PC-3 (cell line): ENCODE measurements at regions of chr7 and their contacts with region 1.

Region 1: DNA sequence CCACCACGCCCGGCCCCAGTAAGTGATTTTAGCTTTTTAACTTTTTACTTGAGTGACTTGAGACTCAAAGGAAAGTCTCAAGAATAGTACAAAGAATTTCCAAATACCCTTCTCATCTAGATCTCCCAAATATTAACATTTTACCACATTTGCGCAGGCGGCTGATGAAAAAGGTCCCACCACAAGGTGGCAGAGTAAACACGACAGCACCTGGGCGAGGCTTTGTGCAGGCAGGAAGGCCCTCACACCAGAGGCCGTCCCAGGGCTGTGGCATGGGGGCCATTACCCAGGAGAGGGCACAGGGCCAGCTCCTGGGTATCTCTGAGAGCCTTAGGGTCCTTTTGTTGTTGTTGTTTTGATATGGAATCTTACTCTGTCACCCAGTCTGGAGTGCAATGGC is 50.0 kb upstream of the WIPI2 start:
- DNase-seq: peak; percentile 22
- ATAC-seq: peak; percentile 37; the same call in 1 of the 2 replicates
- H3K4me3 ChIP-seq: no peak overlapping the region
- H3K27ac ChIP-seq: no peak overlapping the region
- H3K4me1 ChIP-seq: no peaks in the 10 kb centered on the region
- H3K27me3 ChIP-seq: no peaks in the 10 kb centered on the region
- CTCF ChIP-seq: peak; percentile 49

Region 2: GRCh38 chr7:4700577-4701235 is 439.3 kb before region 1 on chr7:
- CTCF ChIA-PET with region 1: no interaction called
- POLR2A ChIA-PET with region 1: no interaction called
- intact Hi-C with region 1: no loop called
- DNase-seq: no peak
- ATAC-seq: no peak
- H3K4me3 ChIP-seq: no peak overlapping the region
- H3K27ac ChIP-seq: no peak overlapping the region
- H3K4me1 ChIP-seq: no peaks in the 10 kb centered on the region
- H3K27me3 ChIP-seq: no peaks in the 10 kb centered on the region
- CTCF ChIP-seq: no peak

Region 3: GRCh38 chr7:4973728-4974198 is 166.2 kb before region 1 on chr7:
- CTCF ChIA-PET with region 1: no interaction called
- POLR2A ChIA-PET with region 1: no interaction called
- intact Hi-C with region 1: no loop called
- DNase-seq: peak; percentile 92
- ATAC-seq: peak; percentile 92
- H3K4me3 ChIP-seq: peak overlapping the region; percentile 77
- H3K27ac ChIP-seq: peak overlapping the region; percentile 66
- H3K4me1 ChIP-seq: no peaks in the 10 kb centered on the region; the same call in 1 of the 2 replicates
- H3K27me3 ChIP-seq: no peaks in the 10 kb centered on the region
- CTCF ChIP-seq: peak; percentile 80

Region 4: DNA sequence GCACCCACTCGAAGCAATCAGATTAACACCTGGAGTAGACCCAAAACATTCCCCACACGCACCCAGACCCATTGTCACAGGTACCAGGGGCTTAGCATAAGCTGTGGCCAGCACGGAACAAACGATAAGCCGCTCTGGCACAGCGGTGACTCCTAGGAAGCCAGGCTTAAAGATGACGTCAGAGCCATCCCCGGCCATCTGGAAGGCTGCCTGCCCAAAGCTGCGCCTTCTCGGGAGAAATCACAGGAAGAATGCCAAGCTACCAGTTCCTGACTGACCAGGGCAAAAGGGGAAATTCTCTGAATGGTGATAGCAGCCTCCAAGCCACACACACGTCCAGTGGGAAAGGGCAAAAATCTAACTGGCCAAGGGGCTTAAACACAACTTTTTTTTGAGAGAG is 37.1 kb after region 1 on chr7:
- CTCF ChIA-PET with region 1: no interaction called
- POLR2A ChIA-PET with region 1: no interaction called
- intact Hi-C with region 1: loop called (anchors 1 kb)
- DNase-seq: peak; percentile 60
- ATAC-seq: peak; percentile 89
- H3K4me3 ChIP-seq: no peak overlapping the region
- H3K27ac ChIP-seq: no peak overlapping the region
- H3K4me1 ChIP-seq: no peaks in the 10 kb centered on the region
- H3K27me3 ChIP-seq: no peaks in the 10 kb centered on the region
- CTCF ChIP-seq: no peak

Region 5: DNA sequence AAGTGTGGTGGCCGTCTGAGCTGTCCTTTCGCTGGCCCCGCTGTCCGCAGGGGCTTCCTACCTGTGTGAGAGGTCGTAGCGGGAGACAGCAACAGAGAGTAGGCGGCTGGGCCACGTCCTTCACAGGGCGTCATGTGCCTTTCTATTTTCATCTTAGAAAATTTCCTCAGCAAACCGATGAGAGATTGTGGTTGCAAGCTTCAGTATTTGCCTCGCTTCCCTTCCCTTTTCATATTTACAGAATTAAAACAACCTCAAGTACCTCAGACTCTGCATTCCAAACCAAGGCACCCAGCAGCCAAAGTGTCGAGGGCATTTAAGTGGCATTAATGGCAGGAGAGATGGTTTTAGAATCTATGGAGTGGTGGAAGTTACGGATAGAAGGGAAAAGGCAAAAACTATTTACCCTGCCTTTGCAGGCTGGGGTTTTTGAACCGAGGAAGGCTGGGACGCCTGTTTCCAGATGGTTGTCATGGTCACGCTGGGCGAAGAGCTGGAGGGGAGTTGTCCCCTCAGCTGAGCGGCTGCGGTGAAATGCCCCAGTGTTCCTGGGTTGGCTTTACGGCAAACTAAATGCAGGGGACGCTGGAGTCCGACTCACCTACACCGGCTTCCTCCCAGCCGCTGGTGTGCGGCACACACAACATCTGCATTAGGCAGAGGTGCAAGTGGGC is 92.0 kb after region 1 on chr7:
- CTCF ChIA-PET with region 1: no interaction called
- POLR2A ChIA-PET with region 1: no interaction called
- intact Hi-C with region 1: no loop called
- DNase-seq: no peak
- ATAC-seq: no peak
- H3K4me3 ChIP-seq: no peak overlapping the region
- H3K27ac ChIP-seq: no peak overlapping the region
- H3K4me1 ChIP-seq: peaks cover 9% of the 10 kb centered on the region
- H3K27me3 ChIP-seq: no peaks in the 10 kb centered on the region
- CTCF ChIP-seq: no peak